Heart left ventricle (tissue), 16 donors: ENCODE measurements at regions of chr13 and their contacts with region 1.

Region 1: DNA sequence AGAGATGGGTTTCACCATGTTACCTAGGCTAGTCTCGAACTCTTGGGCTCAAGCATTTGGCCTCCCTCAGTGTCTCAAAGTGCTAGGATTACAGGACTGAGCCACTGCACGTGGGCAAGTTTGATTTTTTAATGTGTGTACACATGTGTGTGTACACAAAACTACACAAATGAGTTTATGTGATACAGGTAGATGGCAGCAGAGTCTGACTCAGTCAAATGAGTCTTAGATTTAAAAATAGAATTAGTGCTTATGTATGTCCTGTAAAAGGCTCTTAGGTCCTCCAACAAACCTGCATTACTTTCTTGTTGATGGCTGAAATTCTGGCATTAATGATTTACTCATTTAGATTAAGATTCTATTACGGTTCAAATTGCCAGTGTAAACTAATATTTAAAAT is 293.7 kb downstream of the PCDH17 start:
- DNase-seq: no peak
- ATAC-seq: peak in 3 of 4 donors; percentile 50 to 57 (median 55)
- H3K4me3 ChIP-seq: no peak overlapping the region
- H3K27ac ChIP-seq: no peak overlapping the region
- H3K4me1 ChIP-seq: no peaks in the 10 kb centered on the region
- H3K27me3 ChIP-seq: no peaks in the 10 kb centered on the region
- CTCF ChIP-seq: peak in 10 of 12 donors; percentile 11 to 53 (median 30)
- POLR2A ChIP-seq: no peak

Region 2: GRCh38 chr13:57073983-57074382 is 851.3 kb before region 1 on chr13:
- intact Hi-C with region 1: no loop called
- DNase-seq: no peak
- ATAC-seq: no peak
- H3K4me3 ChIP-seq: no peak overlapping the region
- H3K27ac ChIP-seq: no peak overlapping the region
- H3K4me1 ChIP-seq: no peaks in the 10 kb centered on the region
- H3K27me3 ChIP-seq: no peaks in the 10 kb centered on the region
- CTCF ChIP-seq: no peak
- POLR2A ChIP-seq: no peak

Region 3: DNA sequence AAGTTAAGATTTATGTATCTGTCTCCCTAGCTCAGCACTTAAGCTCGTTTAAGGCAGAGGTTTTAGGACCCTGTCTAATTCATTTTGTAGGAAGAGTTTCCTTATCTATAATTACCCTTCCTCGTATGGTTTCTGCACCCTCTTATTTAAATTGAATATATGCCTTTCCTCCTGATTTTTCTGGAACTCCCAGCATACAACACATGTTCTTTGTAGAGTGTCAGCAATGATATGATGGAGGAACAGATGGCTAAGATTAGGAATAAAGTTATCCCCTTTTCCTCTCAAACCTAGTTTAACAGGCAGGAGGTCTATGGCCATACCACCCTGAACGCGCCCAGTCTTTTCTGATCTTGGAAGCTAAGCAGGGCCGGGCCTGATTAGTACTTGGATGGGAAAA is 65.8 kb after region 1 on chr13:
- intact Hi-C with region 1: no loop called
- DNase-seq: no peak
- ATAC-seq: no peak
- H3K4me3 ChIP-seq: no peak overlapping the region
- H3K27ac ChIP-seq: no peak overlapping the region
- H3K4me1 ChIP-seq: no peaks in the 10 kb centered on the region
- H3K27me3 ChIP-seq: no peaks in the 10 kb centered on the region
- CTCF ChIP-seq: no peak
- POLR2A ChIP-seq: no peak

Region 4: DNA sequence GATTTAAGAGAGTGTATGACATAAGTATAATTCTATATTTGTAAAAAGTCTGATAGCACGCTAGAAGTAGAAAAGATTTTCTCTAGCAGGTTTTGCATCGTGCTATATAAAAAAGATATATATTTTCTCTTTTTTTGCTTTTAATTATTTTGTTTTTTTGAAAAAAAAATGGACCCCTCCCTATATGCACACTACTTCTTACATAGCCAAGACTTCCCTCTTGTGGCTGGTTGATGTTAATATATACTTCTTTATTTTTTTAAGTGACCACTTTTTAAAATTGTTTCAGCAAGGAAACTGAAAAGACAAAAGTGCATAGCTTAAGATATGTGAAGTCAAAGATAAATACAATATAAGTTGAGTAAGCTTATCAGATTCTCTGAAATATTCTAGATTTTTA is 1035.6 kb after region 1 on chr13:
- intact Hi-C with region 1: loop called in 1 of 10 experiments (anchors 10 kb)
- DNase-seq: no peak
- ATAC-seq: no peak
- H3K4me3 ChIP-seq: no peak overlapping the region
- H3K27ac ChIP-seq: no peak overlapping the region
- H3K4me1 ChIP-seq: no peaks in the 10 kb centered on the region
- H3K27me3 ChIP-seq: no peaks in the 10 kb centered on the region
- CTCF ChIP-seq: peak in 9 of 12 donors; percentile 10 to 49 (median 25)
- POLR2A ChIP-seq: no peak